PC-3 (cell line): ENCODE measurements at regions of chr12 and their contacts with region 1.

Region 1: GRCh38 chr12:53220801-53221202 is 11.2 kb downstream of the RARG start:
- DNase-seq: peak; percentile 97
- ATAC-seq: peak; percentile 65
- H3K4me3 ChIP-seq: peak overlapping the region; percentile 80
- H3K27ac ChIP-seq: peak overlapping the region; percentile 95
- H3K4me1 ChIP-seq: peaks cover 60% of the 10 kb centered on the region
- H3K27me3 ChIP-seq: no peaks in the 10 kb centered on the region
- CTCF ChIP-seq: no peak

Region 2: DNA sequence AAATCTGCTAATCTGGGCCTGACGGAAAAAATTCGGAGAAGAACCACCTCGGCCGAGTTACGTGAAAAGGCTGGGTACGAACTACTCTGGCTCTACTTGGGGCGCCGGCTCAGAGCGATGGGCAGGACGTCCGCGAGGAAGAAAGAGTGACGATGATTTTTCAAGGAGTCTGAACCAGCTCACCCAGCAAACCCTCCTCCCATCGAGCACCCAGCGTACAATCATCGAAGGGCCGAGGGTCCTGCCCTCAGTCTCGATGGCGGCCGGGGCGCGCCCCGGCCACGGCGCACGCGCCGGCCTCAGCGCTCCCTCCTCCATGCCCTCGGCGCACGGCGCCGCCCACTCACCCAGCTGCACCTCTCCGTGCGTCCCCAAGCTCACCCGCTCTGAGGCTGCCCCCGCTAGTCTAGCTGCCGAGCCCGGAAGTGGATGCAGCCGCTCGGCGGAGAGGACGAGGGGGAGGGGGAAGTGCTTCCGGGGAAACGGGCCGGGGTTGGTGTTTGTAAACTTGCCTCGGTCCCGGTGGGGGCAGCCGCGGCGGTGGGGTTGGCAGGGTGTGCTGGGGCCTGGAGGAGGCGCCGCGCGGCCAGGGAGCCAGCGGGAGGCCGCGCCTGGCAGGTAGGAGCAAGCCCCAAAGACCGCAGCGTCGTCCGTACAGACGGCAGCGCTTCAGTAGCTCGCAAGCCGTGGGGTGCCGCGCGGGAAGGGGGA is 40.4 kb before region 1 on chr12 and contains the starts of genes CSAD and ZNF740:
- CTCF ChIA-PET with region 1: no interaction called
- POLR2A ChIA-PET with region 1: no interaction called
- intact Hi-C with region 1: loop called (anchors 2 kb)
- DNase-seq: peak; percentile 98
- ATAC-seq: peak; percentile 96
- H3K4me3 ChIP-seq: peak within 1 kb of the TSS; percentile 94
- H3K27ac ChIP-seq: peak within 1 kb of the TSS; percentile 90
- H3K4me1 ChIP-seq: peaks cover 37% of the 10 kb centered on the region
- H3K27me3 ChIP-seq: no peaks in the 10 kb centered on the region
- CTCF ChIP-seq: no peak
- total RNA-seq, gene CSAD: 21.5 and 23.8 TPM in 2 replicates
- total RNA-seq, gene ZNF740: 12.3 and 12.8 TPM in 2 replicates

Region 3: GRCh38 chr12:53295070-53295890 is 74.5 kb after region 1 on chr12 and contains the start of gene PFDN5:
- CTCF ChIA-PET with region 1: no interaction called
- POLR2A ChIA-PET with region 1: interaction called, 5 read pairs
- intact Hi-C with region 1: loop called (anchors 2 kb)
- DNase-seq: peak; percentile 88
- ATAC-seq: peak; percentile 81
- H3K4me3 ChIP-seq: peak within 1 kb of the TSS; percentile 96
- H3K27ac ChIP-seq: peak within 1 kb of the TSS; percentile 98
- H3K4me1 ChIP-seq: peaks cover 44% of the 10 kb centered on the region
- H3K27me3 ChIP-seq: no peaks in the 10 kb centered on the region
- CTCF ChIP-seq: no peak
- total RNA-seq, gene PFDN5: 476 and 519 TPM in 2 replicates

Region 4: GRCh38 chr12:53305515-53305914 is 84.7 kb after region 1 on chr12:
- CTCF ChIA-PET with region 1: no interaction called
- POLR2A ChIA-PET with region 1: no interaction called
- intact Hi-C with region 1: no loop called
- DNase-seq: no peak
- ATAC-seq: no peak
- H3K4me3 ChIP-seq: no peak overlapping the region
- H3K27ac ChIP-seq: no peak overlapping the region
- H3K4me1 ChIP-seq: peaks cover 9% of the 10 kb centered on the region
- H3K27me3 ChIP-seq: no peaks in the 10 kb centered on the region
- CTCF ChIP-seq: no peak